Activated CD4-positive, alpha-beta T cell treated with anti-CD3 and anti-CD28 coated beads for 36 hours (primary cell): ENCODE measurements at regions of chr16 and their contacts with region 1.

Region 1: DNA sequence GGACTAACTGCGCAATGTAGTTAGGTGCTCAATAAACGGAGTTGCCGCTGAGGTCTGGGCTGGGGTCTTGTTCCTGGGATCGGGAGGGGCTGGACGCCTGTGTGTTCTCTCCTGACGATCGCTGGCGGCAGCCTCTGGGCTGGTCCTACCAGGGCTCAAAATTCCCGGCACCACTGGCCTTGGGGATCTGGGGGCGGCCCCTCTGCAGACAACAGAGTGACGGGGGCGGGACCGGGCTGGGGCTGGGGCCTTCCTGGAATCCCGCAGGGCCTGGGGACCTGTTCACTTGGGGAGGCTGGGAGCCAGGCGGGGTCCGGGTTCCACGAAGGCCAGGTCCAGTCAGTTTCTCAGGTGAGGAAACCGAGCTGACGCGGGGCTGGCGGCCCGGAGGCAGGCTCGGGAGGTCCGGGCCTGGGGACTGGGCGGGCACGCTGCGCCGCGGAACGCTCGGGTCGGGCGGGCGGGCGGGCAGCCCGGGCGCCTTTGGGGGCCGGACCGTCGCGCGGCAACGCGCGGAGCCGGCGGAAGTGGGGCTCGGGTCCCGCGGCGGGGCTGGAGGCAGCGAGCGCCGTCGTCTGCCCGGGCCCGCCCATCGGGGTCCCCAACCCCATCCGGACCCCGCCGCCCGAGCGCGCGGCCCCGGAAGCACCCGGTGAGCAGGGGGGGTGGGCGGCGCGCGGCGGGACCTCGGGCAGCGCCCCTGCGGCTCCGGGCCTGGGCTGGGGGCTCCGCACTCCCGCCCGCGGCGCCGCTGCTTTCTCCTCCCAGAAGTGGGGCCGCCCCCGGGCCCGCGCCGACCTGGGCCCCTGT is at the start of gene PIGQ:
- DNase-seq: peak; percentile 79
- ATAC-seq: peak; percentile 70
- H3K4me3 Mint-ChIP-seq: peak within 1 kb of the TSS; percentile 79
- H3K27ac Mint-ChIP-seq: peak within 1 kb of the TSS; percentile 92
- H3K4me1 Mint-ChIP-seq: peaks cover 26% of the 10 kb centered on the region
- H3K27me3 Mint-ChIP-seq: no peaks in the 10 kb centered on the region
- total RNA-seq, gene PIGQ: 24.2 to 24.7 TPM

Region 2: GRCh38 chr16:370443-370842 is 199.2 kb before region 1 on chr16 and contains the start of gene MRPL28:
- CTCF ChIA-PET with region 1: no interaction called
- POLR2A ChIA-PET with region 1: no interaction called
- intact Hi-C with region 1: loop called in 1 of 2 experiments (anchors 1 kb)
- DNase-seq: peak; percentile 97
- ATAC-seq: peak; percentile 100
- H3K4me3 Mint-ChIP-seq: peak within 1 kb of the TSS; percentile 78
- H3K27ac Mint-ChIP-seq: peak within 1 kb of the TSS; percentile 92
- H3K4me1 Mint-ChIP-seq: peaks cover 17% of the 10 kb centered on the region
- H3K27me3 Mint-ChIP-seq: no peaks in the 10 kb centered on the region
- total RNA-seq, gene MRPL28: 90.2 to 94.4 TPM

Region 3: DNA sequence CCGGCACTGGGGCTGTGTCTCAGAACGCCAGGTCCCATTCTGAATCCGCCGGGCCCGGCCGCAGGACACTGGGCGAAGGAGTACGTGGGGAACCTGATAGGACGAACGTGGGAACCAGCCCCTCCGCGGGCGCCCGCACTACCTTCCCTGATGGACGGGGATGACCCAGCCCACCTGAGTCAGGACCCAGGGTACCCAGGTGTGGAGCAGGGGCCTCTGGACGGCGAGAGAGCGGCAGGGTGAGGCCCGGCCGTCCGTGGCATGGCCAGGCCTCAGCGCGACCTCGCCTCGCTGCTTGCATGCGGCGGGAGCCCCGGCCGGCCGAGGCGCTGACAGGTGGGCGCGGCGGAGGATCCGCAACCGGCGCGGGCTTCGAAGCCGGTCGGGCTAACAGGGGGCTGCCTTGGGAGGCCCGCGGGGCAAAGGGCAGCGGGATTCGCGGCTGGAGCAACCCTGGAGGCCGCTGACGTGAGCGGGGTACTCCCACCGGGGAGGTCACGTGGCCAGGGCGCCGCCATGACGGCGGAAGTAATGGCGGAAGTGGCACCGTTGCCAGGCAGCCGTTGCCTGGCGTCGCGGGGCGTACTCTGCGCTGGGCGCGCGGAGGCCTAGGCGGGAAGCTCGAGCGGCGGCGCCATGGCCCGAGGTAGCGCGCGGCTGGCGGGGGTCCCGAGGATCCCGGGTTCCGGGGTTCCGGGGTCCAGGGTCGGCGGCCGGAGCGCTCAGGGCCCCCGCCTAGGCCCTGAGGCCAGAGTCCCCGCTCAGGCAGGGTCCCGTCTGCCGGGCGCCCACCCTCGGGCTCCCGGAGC is 79.3 kb after region 1 on chr16 and contains the start of gene WDR90:
- CTCF ChIA-PET with region 1: no interaction called
- POLR2A ChIA-PET with region 1: no interaction called
- intact Hi-C with region 1: loop called in 1 of 2 experiments (anchors 1 kb)
- DNase-seq: peak; percentile 96
- ATAC-seq: peak; percentile 92
- H3K4me3 Mint-ChIP-seq: peak within 1 kb of the TSS; percentile 81
- H3K27ac Mint-ChIP-seq: peak within 1 kb of the TSS; percentile 73
- H3K4me1 Mint-ChIP-seq: peaks cover 15% of the 10 kb centered on the region
- H3K27me3 Mint-ChIP-seq: no peaks in the 10 kb centered on the region
- total RNA-seq, gene WDR90: 43.6 to 55.9 TPM